Activated B cell treated with CpG ODN at 0.5 μM for 24 hours (primary cell): ENCODE measurements at regions of chr13 and their contacts with region 1.

Region 1: DNA sequence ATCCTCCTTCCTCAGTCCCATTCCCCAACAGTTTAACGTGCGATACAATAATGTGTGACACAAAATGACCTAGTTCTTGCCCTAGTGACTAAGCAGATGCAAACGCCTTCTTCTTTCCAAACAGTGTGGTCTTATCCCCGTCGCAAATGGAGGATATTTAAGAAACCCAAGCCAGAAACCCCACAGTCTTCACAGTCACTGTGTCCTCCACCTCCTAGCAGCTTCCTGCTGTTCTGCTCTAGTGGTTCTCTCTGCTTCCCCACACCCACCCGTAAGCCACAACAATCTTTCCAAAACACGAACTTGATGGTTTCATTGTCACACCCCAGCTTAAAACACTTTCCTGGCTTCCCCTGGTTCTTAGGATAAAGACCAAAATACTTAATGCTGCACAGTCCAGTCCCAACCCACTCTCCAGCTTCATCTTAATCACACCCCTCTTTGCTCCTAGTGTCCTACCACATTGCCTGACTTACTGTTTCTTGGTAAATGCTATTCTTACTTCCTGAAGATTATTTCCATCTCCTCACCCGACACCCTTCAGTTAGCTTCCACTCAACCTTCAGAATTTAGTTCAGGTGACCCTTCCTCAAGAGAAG is 32.3 kb downstream of the ITM2B start:
- DNase-seq: peak; percentile 23
- ATAC-seq: peak; percentile 86
- H3K4me3 Mint-ChIP-seq: peak overlapping the region; percentile 75
- H3K27ac Mint-ChIP-seq: peak overlapping the region; percentile 85
- H3K4me1 Mint-ChIP-seq: peaks cover 52% of the 10 kb centered on the region
- H3K27me3 Mint-ChIP-seq: no peaks in the 10 kb centered on the region
- CTCF ChIP-seq: no peak

Region 2: GRCh38 chr13:48249018-48249417 is 16.3 kb before region 1 on chr13:
- CTCF ChIA-PET with region 1: no interaction called
- POLR2A ChIA-PET with region 1: no interaction called
- intact Hi-C with region 1: loop called (anchors 2 kb)
- DNase-seq: no peak
- ATAC-seq: no peak
- H3K4me3 Mint-ChIP-seq: no peak overlapping the region
- H3K27ac Mint-ChIP-seq: no peak overlapping the region
- H3K4me1 Mint-ChIP-seq: peaks cover 32% of the 10 kb centered on the region
- H3K27me3 Mint-ChIP-seq: no peaks in the 10 kb centered on the region
- CTCF ChIP-seq: no peak

Region 3: DNA sequence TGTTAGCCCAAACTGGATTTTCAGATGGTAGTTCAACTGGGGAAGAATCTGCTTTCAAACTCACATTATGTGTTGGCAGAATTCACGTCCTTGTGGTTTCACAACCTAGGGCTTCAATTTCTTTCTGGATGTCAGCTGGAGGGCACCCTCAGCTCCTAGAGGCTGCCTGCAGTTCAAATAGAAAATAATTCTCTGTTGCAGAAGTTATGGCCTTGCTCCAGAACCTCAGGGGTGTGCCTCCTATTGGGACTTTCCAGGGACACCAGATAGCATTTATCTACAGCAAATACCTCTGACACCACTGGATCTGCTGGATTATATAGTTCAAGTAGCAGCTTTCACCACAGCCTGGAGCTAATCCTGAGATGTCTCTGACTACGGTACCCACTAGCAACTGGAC is 26.4 kb after region 1 on chr13:
- CTCF ChIA-PET with region 1: no interaction called
- POLR2A ChIA-PET with region 1: interaction called, 3 read pairs
- intact Hi-C with region 1: loop called (anchors 1 kb)
- DNase-seq: no peak
- ATAC-seq: no peak
- H3K4me3 Mint-ChIP-seq: no peak overlapping the region
- H3K27ac Mint-ChIP-seq: no peak overlapping the region
- H3K4me1 Mint-ChIP-seq: peaks cover 17% of the 10 kb centered on the region
- H3K27me3 Mint-ChIP-seq: no peaks in the 10 kb centered on the region
- CTCF ChIP-seq: no peak